HCT116 (cell line): ENCODE measurements at regions of chr10 and their contacts with region 1.

Region 1: DNA sequence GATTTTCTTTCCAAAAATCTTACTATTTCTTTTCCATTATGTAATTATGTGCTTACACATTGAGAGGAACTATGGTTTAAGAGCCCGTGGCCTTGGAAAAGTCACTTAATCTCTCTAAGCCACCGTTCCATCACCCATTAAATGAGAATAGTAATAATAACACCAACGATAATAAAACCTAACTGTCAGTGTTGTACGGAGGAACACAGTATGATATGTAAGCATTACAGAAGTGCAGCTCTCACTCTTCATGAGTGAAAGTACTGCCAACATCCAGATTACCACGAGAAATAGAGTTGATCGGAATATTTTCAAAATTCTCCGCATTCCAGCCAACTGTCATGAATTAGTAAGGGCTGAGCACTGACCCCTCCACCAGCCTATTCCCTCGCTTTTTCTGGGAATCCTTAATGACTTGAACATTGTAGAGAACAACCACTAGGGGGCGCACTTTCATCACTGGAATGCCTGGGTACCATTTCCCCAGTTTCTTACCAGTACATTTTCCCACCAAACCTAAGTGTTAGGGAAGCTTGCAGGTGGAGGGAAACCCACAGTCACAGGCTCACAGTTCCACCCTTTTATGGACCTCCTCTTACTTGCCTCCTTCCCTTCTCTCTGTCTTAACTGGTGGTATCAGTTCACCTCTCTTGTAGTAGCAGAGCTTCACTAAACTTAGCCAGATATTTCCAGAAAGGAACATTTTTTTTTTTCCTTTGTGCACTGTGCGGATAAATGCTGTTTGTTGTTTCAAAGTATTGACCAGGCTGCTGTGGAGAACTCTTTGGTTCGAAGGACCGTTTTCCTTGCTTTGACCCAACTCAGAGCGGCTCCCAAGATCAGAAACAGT is 27.8 kb downstream of the NKX2-3 start:
- DNase-seq: peak; percentile 61
- ATAC-seq: peak; percentile 94
- H3K4me3 ChIP-seq: no peak overlapping the region
- H3K27ac ChIP-seq: no peak overlapping the region
- H3K4me1 ChIP-seq: peaks cover 0 to 4% of the 10 kb centered on the region in 2 experiments; a peak in 1 of 4 replicates
- H3K27me3 ChIP-seq: no peaks in the 10 kb centered on the region; the same call in 1 of the 2 replicates
- CTCF ChIP-seq: peak; percentile 81 to 99 (median 92)
- POLR2A ChIP-seq: no peak
- RAD21 ChIP-seq: peak; percentile 94

Region 2: DNA sequence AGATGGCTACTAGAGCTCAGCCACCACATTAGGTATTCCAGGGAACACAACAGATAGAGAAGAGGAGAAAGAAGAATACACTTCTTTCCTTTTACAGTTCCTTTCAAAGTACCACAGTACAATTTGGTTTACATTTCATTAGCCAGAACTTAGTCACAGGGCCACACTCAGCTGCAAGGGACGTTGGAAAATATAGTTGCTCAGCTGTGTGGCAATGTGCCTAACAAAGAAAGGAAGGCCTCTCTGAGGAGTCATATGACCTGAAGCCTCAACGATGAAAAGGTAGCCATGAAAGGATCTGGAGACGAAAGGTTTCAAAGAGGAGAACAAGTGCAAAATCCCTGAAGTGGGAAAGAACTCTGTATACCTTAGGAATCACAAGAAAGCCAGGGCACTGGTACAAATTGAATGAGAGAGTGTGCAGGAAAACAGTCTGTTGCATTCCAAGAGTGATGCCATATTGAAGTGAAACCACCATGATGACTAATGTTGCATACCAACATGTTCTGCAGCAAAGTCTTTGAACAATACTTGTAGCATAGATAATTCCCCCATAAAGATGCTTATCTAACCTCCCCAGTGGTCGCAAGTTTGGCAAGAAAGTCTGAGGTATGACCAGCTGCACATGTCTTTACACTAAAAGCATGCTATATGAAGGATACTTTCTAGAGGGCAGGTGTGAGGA is 603.8 kb before region 1 on chr10:
- CTCF ChIA-PET with region 1: no interaction called
- POLR2A ChIA-PET with region 1: no interaction called
- RAD21 ChIA-PET with region 1: no interaction called
- intact Hi-C with region 1: no loop called
- DNase-seq: no peak
- ATAC-seq: no peak
- H3K4me3 ChIP-seq: no peak overlapping the region
- H3K27ac ChIP-seq: no peak overlapping the region
- H3K4me1 ChIP-seq: no peaks in the 10 kb centered on the region
- H3K27me3 ChIP-seq: no peaks in the 10 kb centered on the region; the same call in 1 of the 2 replicates
- CTCF ChIP-seq: no peak
- POLR2A ChIP-seq: no peak
- RAD21 ChIP-seq: no peak

Region 3: DNA sequence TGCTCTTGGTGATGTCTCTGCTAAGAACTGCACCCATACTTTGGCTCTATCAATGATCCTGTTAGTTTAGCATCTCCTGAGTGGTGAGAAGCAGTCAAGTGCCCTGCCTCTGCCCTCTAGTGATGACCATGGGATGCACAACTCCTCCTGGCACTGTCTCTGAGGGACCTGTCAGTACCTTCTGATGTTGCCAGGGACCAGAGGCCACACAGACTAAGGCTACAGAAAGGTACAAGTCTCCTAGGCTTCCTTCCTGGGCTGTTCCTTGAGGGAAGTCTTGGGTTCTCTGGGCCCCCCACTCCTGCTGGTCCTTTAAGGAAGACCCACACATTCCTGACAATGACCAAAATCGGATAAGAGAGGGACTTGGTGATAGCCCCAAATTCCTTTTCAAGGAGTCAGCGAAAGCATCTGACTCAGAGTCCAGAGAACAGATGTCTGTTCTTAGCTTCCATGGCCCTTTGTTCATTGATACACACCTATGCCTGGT is 12.4 kb before region 1 on chr10:
- CTCF ChIA-PET with region 1: interaction called, 15 read pairs
- POLR2A ChIA-PET with region 1: no interaction called
- RAD21 ChIA-PET with region 1: no interaction called
- intact Hi-C with region 1: no loop called
- DNase-seq: peak; percentile 50
- ATAC-seq: peak; percentile 98
- H3K4me3 ChIP-seq: no peak overlapping the region
- H3K27ac ChIP-seq: no peak overlapping the region
- H3K4me1 ChIP-seq: peaks cover 0 to 10% of the 10 kb centered on the region in 2 experiments; a peak in 1 of 4 replicates
- H3K27me3 ChIP-seq: peaks cover 26% of the 10 kb centered on the region; the same call in 1 of the 2 replicates
- CTCF ChIP-seq: peak; percentile 71 to 84 (median 81)
- POLR2A ChIP-seq: no peak
- RAD21 ChIP-seq: peak; percentile 71

Region 4: GRCh38 chr10:99612167-99612831 is 51.8 kb after region 1 on chr10:
- CTCF ChIA-PET with region 1: interaction called, 52 read pairs
- POLR2A ChIA-PET with region 1: interaction called, 5 read pairs
- RAD21 ChIA-PET with region 1: interaction called, 3 to 5 read pairs
- intact Hi-C with region 1: loop called (anchors 1 kb)
- DNase-seq: peak; percentile 59
- ATAC-seq: peak; percentile 88
- H3K4me3 ChIP-seq: no peak overlapping the region
- H3K27ac ChIP-seq: no peak overlapping the region
- H3K4me1 ChIP-seq: no peaks in the 10 kb centered on the region
- H3K27me3 ChIP-seq: no peaks in the 10 kb centered on the region
- CTCF ChIP-seq: peak in 2 of 3 experiments; percentile 87 to 97; a peak in 4 of 6 replicates
- POLR2A ChIP-seq: no peak
- RAD21 ChIP-seq: no peak

Region 5: DNA sequence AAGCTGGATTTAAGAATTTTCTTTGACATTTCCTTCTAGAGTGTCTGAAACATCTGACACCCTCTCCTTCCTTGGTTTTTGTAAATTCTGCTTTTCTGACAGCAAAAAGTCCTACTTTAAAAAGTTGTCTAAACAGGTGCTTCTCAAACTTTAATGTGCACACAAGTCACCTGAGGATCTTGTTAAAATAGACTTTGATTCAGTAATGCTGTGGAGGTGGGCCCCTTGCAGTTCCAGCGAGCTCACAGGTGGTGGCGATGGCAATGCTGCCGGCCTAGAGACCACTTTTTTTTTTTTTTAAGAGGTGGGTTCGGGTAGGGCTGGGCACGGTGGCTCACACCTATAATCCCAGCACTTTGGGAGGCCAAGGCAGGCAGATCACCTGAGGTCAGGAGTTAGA is 299.1 kb after region 1 on chr10:
- CTCF ChIA-PET with region 1: no interaction called
- POLR2A ChIA-PET with region 1: no interaction called
- RAD21 ChIA-PET with region 1: no interaction called
- intact Hi-C with region 1: no loop called
- DNase-seq: peak; percentile 60
- ATAC-seq: peak; percentile 94
- H3K4me3 ChIP-seq: no peak overlapping the region
- H3K27ac ChIP-seq: no peak overlapping the region
- H3K4me1 ChIP-seq: peaks cover 3 to 8% of the 10 kb centered on the region in 2 experiments; a peak in 2 of 4 replicates
- H3K27me3 ChIP-seq: no peaks in the 10 kb centered on the region
- CTCF ChIP-seq: peak; percentile 75 to 81 (median 79)
- POLR2A ChIP-seq: no peak
- RAD21 ChIP-seq: peak; percentile 75

Region 6: GRCh38 chr10:99880080-99880835 is 319.8 kb after region 1 on chr10:
- CTCF ChIA-PET with region 1: no interaction called
- POLR2A ChIA-PET with region 1: no interaction called
- RAD21 ChIA-PET with region 1: no interaction called
- intact Hi-C with region 1: no loop called
- DNase-seq: no peak
- ATAC-seq: no peak
- H3K4me3 ChIP-seq: no peak overlapping the region
- H3K27ac ChIP-seq: no peak overlapping the region
- H3K4me1 ChIP-seq: no peaks in the 10 kb centered on the region
- H3K27me3 ChIP-seq: no peaks in the 10 kb centered on the region
- CTCF ChIP-seq: no peak
- POLR2A ChIP-seq: no peak
- RAD21 ChIP-seq: no peak

Region 7: DNA sequence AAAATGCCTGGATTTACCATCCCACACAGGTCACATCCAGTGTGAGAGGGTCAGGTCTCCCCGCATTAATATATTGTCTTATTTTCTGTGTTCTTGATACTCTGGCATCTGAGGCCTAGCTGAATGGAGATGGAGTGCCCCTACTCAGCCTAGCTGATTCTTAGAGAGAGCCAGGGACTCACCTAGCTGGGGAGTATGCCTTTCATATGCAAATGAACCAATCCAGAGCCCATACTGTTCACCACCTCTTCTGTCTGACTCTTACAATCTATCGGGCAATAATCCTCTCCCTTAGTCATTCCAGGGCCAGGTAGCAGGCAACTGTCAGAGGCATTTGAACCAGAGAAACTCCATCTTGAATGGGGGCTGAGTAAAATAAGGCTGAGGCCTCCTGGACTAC is 1622.4 kb after region 1 on chr10:
- CTCF ChIA-PET with region 1: no interaction called
- POLR2A ChIA-PET with region 1: no interaction called
- RAD21 ChIA-PET with region 1: no interaction called
- intact Hi-C with region 1: no loop called
- DNase-seq: no peak
- ATAC-seq: no peak
- H3K4me3 ChIP-seq: no peak overlapping the region
- H3K27ac ChIP-seq: no peak overlapping the region
- H3K4me1 ChIP-seq: no peaks in the 10 kb centered on the region
- H3K27me3 ChIP-seq: no peaks in the 10 kb centered on the region; the same call in 1 of the 2 replicates
- CTCF ChIP-seq: no peak
- POLR2A ChIP-seq: no peak
- RAD21 ChIP-seq: no peak